Activated B cell treated with CpG ODN at 0.5 μM for 24 hours (primary cell): ENCODE measurements at regions of chr1 and their contacts with region 1.

Region 1: GRCh38 chr1:222617367-222617951 is 438 bp upstream of the MIA3 start:
- DNase-seq: peak; percentile 80
- ATAC-seq: peak; percentile 92
- H3K4me3 Mint-ChIP-seq: peak overlapping the region; percentile 93
- H3K27ac Mint-ChIP-seq: peak overlapping the region; percentile 91
- H3K4me1 Mint-ChIP-seq: peaks cover 28% of the 10 kb centered on the region
- H3K27me3 Mint-ChIP-seq: peaks cover 20% of the 10 kb centered on the region
- CTCF ChIP-seq: no peak

Region 2: DNA sequence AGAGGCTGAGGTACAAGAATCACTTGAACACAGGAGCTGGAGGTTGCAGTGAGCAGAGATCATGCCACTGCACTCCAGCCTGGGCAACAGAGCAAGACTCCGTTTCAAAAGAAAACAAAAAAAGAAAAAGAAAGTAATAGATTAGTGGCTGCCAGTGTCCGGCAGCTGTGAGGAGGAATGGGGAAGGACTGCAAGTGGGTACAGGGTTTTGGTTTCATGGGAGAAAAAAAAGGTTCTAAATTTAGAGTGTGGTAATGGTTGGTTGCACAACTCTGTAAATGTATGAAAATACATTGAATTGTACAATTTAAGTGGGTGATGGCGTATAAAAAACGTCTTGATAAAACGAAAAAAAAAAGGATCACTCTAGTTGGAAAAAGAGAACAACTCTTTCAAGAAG is 34.4 kb before region 1 on chr1:
- CTCF ChIA-PET with region 1: no interaction called
- POLR2A ChIA-PET with region 1: no interaction called
- intact Hi-C with region 1: no loop called
- DNase-seq: no peak
- ATAC-seq: peak; percentile 77
- H3K4me3 Mint-ChIP-seq: peak overlapping the region; percentile 81
- H3K27ac Mint-ChIP-seq: peak overlapping the region; percentile 93
- H3K4me1 Mint-ChIP-seq: peaks cover 74% of the 10 kb centered on the region
- H3K27me3 Mint-ChIP-seq: no peaks in the 10 kb centered on the region
- CTCF ChIP-seq: no peak

Region 3: GRCh38 chr1:222643938-222644635 is 26.6 kb after region 1 on chr1:
- CTCF ChIA-PET with region 1: no interaction called
- POLR2A ChIA-PET with region 1: interaction called, 14 read pairs
- intact Hi-C with region 1: loop called (anchors 1 kb)
- DNase-seq: peak; percentile 94
- ATAC-seq: peak; percentile 96
- H3K4me3 Mint-ChIP-seq: peak overlapping the region; percentile 100
- H3K27ac Mint-ChIP-seq: peak overlapping the region; percentile 99
- H3K4me1 Mint-ChIP-seq: peaks cover 25% of the 10 kb centered on the region
- H3K27me3 Mint-ChIP-seq: no peaks in the 10 kb centered on the region
- CTCF ChIP-seq: no peak